Activated CD4-positive, alpha-beta T cell treated with anti-CD3 and anti-CD28 coated beads for 36 hours (primary cell): ENCODE measurements at regions of chrX and their contacts with region 1.

Region 1: DNA sequence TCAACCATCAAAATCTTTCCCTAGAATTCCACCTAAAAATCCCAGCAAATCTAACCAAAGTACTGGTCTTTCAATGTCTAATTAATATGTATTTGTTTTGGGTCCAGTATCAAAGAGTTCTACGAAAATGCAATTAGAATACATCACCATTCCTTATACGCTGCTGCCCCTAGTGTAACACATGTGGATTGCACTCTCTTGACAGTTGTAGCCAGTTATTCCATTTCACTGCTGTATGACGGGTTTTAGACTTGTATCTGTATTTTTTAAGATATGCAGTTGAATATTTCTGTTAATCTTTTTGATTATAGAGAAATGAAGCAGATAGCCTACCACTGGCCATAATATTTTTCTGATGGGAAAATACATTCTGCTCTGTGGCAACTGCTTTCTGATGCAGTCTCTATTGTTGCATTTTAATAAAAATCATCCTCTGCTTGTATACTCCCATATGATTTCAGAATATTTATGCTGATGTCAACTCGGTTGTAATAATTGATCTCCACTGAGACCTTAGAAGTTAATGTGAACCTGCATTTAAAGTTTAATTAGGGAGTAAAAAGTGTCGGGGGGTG is 17.1 kb upstream of the PAGE2B start:
- DNase-seq: peak; percentile 31
- ATAC-seq: peak; percentile 73
- H3K4me3 Mint-ChIP-seq: peak overlapping the region; percentile 46
- H3K27ac Mint-ChIP-seq: no peak overlapping the region
- H3K4me1 Mint-ChIP-seq: peaks cover 18% of the 10 kb centered on the region
- H3K27me3 Mint-ChIP-seq: no peaks in the 10 kb centered on the region

Region 2: DNA sequence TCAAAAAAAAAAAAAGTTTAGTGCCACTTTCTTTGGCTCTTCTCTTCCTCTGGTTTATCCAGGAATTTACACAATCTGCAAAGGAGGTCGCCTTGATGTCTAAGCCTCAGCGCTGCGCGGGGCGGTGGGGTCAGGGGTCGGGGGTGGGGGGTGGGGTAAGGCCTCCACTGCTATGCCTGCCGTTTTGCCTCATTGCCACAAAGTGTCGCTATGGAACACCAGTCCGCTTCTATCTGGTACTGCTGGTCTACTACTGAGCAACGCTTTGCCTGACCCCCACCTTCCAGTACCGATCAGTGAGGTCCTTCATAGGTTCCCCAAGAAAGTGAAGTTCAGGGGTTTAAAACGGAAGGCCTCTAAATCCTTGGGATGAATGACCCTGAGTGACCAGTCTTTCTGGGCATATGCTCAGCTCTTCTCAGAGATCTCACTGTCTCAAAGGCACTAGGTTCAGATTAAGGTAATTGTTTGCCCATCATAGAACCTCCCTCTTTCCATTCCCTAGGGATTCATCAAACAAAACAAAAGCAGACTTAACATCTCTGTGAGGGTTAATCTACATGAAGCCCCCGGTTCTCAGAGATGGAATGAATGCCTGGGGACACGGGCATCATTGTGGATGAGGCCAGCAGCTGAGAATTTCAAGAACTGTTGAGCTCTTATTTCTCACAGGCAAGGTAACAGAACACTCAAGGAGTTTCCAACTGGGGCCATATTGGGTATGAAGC is 634.4 kb before region 1 on chrX:
- CTCF ChIA-PET with region 1: no interaction called
- POLR2A ChIA-PET with region 1: no interaction called
- intact Hi-C with region 1: loop called in 1 of 2 experiments (anchors 5 kb)
- DNase-seq: peak; percentile 28
- ATAC-seq: peak; percentile 58
- H3K4me3 Mint-ChIP-seq: no peak overlapping the region
- H3K27ac Mint-ChIP-seq: no peak overlapping the region
- H3K4me1 Mint-ChIP-seq: no peaks in the 10 kb centered on the region
- H3K27me3 Mint-ChIP-seq: no peaks in the 10 kb centered on the region

Region 3: DNA sequence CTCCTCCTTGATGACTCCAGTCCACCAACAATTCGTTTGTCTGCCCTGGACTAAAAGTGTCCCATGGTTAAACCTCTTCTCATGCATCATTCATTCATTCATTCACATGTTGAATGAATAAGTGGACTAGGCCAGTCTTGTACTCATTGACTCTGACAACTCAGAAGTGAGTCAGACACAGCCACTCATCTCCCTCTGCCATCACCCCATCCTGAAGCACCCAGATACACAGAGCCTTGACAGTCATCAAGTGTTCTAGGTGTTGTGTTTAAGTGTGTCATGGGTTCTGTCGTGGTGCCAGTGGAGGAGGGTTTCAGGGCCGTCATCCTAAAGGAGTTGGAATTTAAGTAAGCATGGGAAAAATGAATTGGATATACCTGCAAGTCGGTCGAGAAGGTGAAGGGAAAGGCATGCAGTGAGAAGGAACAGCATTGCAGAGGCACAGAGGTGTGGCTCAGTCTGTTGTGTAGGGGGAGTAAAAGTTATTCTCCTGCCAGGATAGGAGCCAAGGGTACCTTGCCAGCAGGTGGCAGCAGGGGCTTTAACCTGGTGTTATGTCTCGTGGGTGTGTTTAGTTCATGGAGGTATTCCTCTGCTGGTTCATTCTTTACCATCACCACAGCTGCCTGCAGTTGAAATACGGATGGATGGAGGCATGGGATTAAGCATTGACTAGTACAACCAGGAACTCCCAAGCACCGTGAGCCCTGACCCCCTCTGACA is 231.9 kb before region 1 on chrX:
- CTCF ChIA-PET with region 1: no interaction called
- POLR2A ChIA-PET with region 1: no interaction called
- intact Hi-C with region 1: loop called (anchors 5 kb)
- DNase-seq: peak; percentile 38
- ATAC-seq: peak; percentile 90
- H3K4me3 Mint-ChIP-seq: no peak overlapping the region
- H3K27ac Mint-ChIP-seq: no peak overlapping the region
- H3K4me1 Mint-ChIP-seq: peaks cover 6% of the 10 kb centered on the region
- H3K27me3 Mint-ChIP-seq: no peaks in the 10 kb centered on the region

Region 4: DNA sequence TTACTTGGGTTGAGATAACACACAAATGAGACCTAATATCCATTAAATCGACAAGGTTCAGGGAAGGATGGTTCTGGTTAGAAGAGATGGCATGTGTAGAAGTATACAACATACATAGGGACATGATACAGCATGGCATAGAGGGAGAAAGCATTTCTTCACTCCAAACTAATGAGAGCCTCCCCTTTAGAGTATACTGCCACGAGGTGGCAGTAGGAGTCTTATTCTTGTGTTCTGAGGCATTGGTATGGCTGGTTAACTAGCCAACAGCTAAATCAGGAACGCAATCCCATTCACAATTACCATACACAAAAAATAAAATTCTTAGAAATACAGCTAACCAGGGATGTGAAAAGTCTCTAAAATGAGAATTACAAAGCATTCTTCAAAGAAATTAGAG is 166.2 kb before region 1 on chrX:
- CTCF ChIA-PET with region 1: interaction called, 11 read pairs
- POLR2A ChIA-PET with region 1: no interaction called
- intact Hi-C with region 1: loop called (anchors 1 kb)
- DNase-seq: peak; percentile 51
- ATAC-seq: peak; percentile 76
- H3K4me3 Mint-ChIP-seq: no peak overlapping the region
- H3K27ac Mint-ChIP-seq: no peak overlapping the region
- H3K4me1 Mint-ChIP-seq: no peaks in the 10 kb centered on the region
- H3K27me3 Mint-ChIP-seq: no peaks in the 10 kb centered on the region

Region 5: GRCh38 chrX:54999717-55000598 is 57.8 kb before region 1 on chrX and contains the start of gene APEX2:
- CTCF ChIA-PET with region 1: interaction called, 4 read pairs
- POLR2A ChIA-PET with region 1: no interaction called
- intact Hi-C with region 1: loop called in 1 of 2 experiments (anchors 2 kb)
- DNase-seq: peak; percentile 92
- ATAC-seq: peak; percentile 96
- H3K4me3 Mint-ChIP-seq: peak within 1 kb of the TSS; percentile 94
- H3K27ac Mint-ChIP-seq: peak within 1 kb of the TSS; percentile 94
- H3K4me1 Mint-ChIP-seq: peaks cover 21% of the 10 kb centered on the region
- H3K27me3 Mint-ChIP-seq: no peaks in the 10 kb centered on the region
- total RNA-seq, gene APEX2: 37.7 to 41.4 TPM

Region 6: DNA sequence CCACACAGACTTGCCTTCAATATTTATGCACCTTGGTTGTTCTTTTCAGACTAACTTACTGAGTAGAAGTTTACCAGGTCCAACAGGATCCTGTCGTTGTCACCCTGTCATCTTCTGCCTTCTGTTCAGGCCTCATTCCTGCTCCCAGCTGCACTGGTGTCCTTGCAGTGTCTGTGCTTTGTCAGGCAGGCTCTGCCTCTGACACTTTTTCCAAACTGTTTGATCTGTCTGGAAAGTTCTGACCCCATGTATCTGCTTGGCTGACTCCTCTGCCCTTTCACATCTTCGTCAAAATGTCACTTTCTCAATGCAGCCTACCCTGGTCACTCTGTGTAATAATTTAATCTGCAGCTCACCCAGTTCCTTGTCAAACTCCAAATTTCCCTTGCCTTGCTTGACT is 40.9 kb after region 1 on chrX:
- CTCF ChIA-PET with region 1: no interaction called
- POLR2A ChIA-PET with region 1: no interaction called
- intact Hi-C with region 1: no loop called
- DNase-seq: no peak
- ATAC-seq: no peak
- H3K4me3 Mint-ChIP-seq: no peak overlapping the region
- H3K27ac Mint-ChIP-seq: no peak overlapping the region
- H3K4me1 Mint-ChIP-seq: no peaks in the 10 kb centered on the region
- H3K27me3 Mint-ChIP-seq: peaks cover 2% of the 10 kb centered on the region